ENCODE measurements at regions of chr3 and their contacts with region 1.

Region 1: DNA sequence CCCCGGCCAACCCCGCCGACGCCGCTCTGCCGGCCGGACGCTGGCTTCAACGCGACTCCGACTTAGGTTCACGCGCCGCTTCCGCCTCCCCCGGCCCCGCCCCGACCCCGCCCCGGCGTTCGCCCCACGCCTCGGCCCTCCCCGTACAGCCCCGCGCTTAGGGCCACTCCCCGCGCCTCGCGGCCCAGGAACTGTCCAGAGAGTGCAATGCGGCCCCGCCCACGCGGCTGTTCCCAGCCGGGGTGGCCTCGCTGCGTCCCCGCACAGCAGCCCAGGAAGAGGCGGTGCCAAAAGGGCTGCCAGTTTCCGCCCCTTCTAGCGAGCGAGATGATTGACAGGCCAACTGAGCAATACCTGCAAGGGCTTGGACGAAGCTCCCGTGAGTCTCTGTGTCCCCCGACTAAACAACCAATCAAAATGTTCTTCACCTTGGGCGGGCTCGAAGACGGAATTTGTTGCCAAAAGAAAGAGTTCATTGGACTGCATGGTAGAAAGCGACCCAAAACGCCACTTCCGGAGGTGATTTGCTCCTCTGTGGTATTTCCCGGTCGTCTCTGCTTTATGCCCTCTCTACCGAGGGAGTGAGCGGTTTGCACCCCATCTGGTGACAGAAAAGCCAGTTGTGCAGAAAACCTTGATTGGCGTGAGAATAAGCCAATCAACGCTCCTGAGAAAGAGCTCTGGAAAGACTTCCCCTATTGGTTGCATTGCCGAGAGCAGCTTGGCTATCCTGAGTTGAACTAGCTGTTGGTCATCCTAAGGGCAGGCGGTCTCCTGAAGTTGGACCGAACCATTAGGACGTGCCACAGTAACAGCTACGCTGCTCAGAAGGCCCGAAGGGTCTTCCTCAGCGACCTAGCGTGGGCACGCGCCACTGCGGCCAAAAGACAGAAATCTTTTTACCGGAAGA is at the start of gene UBP1:
- DNase-seq: peak; percentile 97 to 99
- H3K4me3 ChIP-seq: peak within 1 kb of the TSS; percentile 78
- H3K27ac ChIP-seq: peak within 1 kb of the TSS; percentile 88
- H3K4me1 ChIP-seq: peaks cover 17% of the 10 kb centered on the region
- H3K27me3 ChIP-seq: no peaks in the 10 kb centered on the region
- CTCF ChIP-seq: no peak
- total RNA-seq, gene UBP1: 47.9 and 50.4 TPM in 2 replicates

Region 2: GRCh38 chr3:33113772-33114621 is 326.6 kb before region 1 on chr3 and contains the start of gene CRTAP:
- CTCF ChIA-PET with region 1: no interaction called
- POLR2A ChIA-PET with region 1: no interaction called
- intact Hi-C with region 1: loop called (anchors 2 kb)
- DNase-seq: peak; percentile 82 to 96
- H3K4me3 ChIP-seq: peak within 1 kb of the TSS; percentile 73
- H3K27ac ChIP-seq: peak within 1 kb of the TSS; percentile 72
- H3K4me1 ChIP-seq: 0 out of 2 replicates have a peak, but pooled peaks cover 7% of the 10 kb centered on the region
- H3K27me3 ChIP-seq: no peaks in the 10 kb centered on the region
- CTCF ChIP-seq: no peak
- total RNA-seq, gene CRTAP: 121 and 134 TPM in 2 replicates

Region 3: DNA sequence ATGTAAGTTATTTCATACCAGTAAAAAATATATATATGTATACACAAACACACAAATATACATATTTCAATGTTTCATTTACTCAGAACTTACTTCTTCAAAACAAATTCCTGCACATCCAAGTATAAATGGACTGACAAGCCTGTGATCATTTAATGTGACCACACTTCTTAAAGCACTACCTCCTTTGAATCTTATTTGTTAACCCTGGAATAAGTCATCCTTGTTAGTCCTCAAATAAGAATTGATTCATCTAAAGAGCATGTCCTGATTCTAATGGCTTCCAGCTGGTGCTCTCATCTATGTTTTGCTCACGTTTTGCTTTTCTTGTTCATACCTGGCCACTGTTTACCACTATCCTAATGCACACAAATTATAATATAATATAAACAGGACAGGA is 103.5 kb after region 1 on chr3:
- CTCF ChIA-PET with region 1: interaction called, 11 read pairs
- POLR2A ChIA-PET with region 1: no interaction called
- intact Hi-C with region 1: no loop called
- DNase-seq: no peak
- H3K4me3 ChIP-seq: no peak overlapping the region
- H3K27ac ChIP-seq: no peak overlapping the region
- H3K4me1 ChIP-seq: no peaks in the 10 kb centered on the region
- H3K27me3 ChIP-seq: no peaks in the 10 kb centered on the region
- CTCF ChIP-seq: no peak

Region 4: GRCh38 chr3:33578325-33579177 is 138.0 kb after region 1 on chr3:
- CTCF ChIA-PET with region 1: no interaction called
- POLR2A ChIA-PET with region 1: no interaction called
- intact Hi-C with region 1: loop called (anchors 2 kb)
- DNase-seq: peak; percentile 2 to 64
- H3K4me3 ChIP-seq: no peak overlapping the region
- H3K27ac ChIP-seq: peak overlapping the region; percentile 62
- H3K4me1 ChIP-seq: peaks cover 24% of the 10 kb centered on the region
- H3K27me3 ChIP-seq: no peaks in the 10 kb centered on the region
- CTCF ChIP-seq: no peak

Region 5: GRCh38 chr3:33798411-33799201 is 358.0 kb after region 1 on chr3 and contains the start of gene PDCD6IP:
- CTCF ChIA-PET with region 1: no interaction called
- POLR2A ChIA-PET with region 1: no interaction called
- intact Hi-C with region 1: loop called (anchors 5 kb)
- DNase-seq: peak; percentile 80 to 93
- H3K4me3 ChIP-seq: peak within 1 kb of the TSS; percentile 93
- H3K27ac ChIP-seq: peak within 1 kb of the TSS; percentile 92
- H3K4me1 ChIP-seq: peaks cover 9% of the 10 kb centered on the region
- H3K27me3 ChIP-seq: no peaks in the 10 kb centered on the region
- CTCF ChIP-seq: no peak
- total RNA-seq, gene PDCD6IP: 203 and 209 TPM in 2 replicates

Measured in PC-9 (cell line).